Tibial artery (tissue), 4 donors: ENCODE measurements at regions of chr20 and their contacts with region 1.

Region 1: GRCh38 chr20:49713753-49714712 is at the start of gene B4GALT5:
- DNase-seq: peak; percentile 51 to 78
- H3K4me3 ChIP-seq: peak within 1 kb of the TSS; percentile 70 to 99
- H3K27ac ChIP-seq: peak within 1 kb of the TSS; percentile 88 to 97
- H3K4me1 ChIP-seq: peaks cover 0 to 56% (median 27%) of the 10 kb centered on the region in 4 donors
- H3K27me3 ChIP-seq: no peaks in the 10 kb centered on the region
- CTCF ChIP-seq: no peak

Region 2: GRCh38 chr20:49915378-49916145 is 201.5 kb after region 1 on chr20 and contains the start of gene SPATA2:
- intact Hi-C with region 1: loop called (anchors 10 kb)
- DNase-seq: peak; percentile 97 to 98
- H3K4me3 ChIP-seq: peak within 1 kb of the TSS; percentile 70 to 90
- H3K27ac ChIP-seq: peak within 1 kb of the TSS; percentile 96 to 97
- H3K4me1 ChIP-seq: peaks cover 0 to 32% (median 21%) of the 10 kb centered on the region in 4 donors
- H3K27me3 ChIP-seq: no peaks in the 10 kb centered on the region
- CTCF ChIP-seq: no peak

Region 3: DNA sequence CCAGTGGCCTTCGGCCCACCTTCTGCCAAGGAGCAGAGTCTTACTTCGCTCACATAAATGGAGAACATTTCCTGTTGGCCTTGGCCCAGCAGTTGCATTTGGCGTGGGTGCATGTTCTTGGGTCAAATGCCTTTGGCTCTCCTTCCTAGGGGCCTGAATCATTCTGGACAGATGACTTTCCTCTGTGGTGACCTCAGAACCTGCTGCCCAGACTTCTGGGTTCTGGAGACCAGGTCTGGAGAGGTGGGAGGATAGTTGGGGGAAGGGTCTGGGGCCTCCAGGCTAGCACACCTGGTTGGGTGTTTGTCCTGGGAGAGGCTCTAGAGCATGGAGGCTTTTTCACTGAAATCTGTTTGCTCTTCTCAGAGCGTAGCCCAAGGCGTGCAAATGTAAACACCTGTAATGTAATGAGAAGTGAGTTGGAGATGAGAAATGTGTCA is 1110.2 kb after region 1 on chr20:
- intact Hi-C with region 1: no loop called
- DNase-seq: peak; percentile 84 to 96
- H3K4me3 ChIP-seq: no peak overlapping the region
- H3K27ac ChIP-seq: peak overlapping the region; percentile 75 to 76
- H3K4me1 ChIP-seq: peaks cover 0 to 31% (median 15%) of the 10 kb centered on the region in 4 donors
- H3K27me3 ChIP-seq: no peaks in the 10 kb centered on the region
- CTCF ChIP-seq: no peak